ENCODE measurements at regions of chr4 and their contacts with region 1.

Region 1: GRCh38 chr4:81260443-81261101 is 45.5 kb upstream of the PRKG2 start:
- DNase-seq: no peak
- H3K4me3 ChIP-seq: no peak overlapping the region
- H3K27ac ChIP-seq: no peak overlapping the region
- H3K4me1 ChIP-seq: no peaks in the 10 kb centered on the region
- H3K27me3 ChIP-seq: no peaks in the 10 kb centered on the region
- CTCF ChIP-seq: no peak

Region 2: GRCh38 chr4:80913381-80913780 is 347.2 kb before region 1 on chr4:
- intact Hi-C with region 1: no loop called
- DNase-seq: no peak
- H3K4me3 ChIP-seq: no peak overlapping the region
- H3K27ac ChIP-seq: no peak overlapping the region
- H3K4me1 ChIP-seq: no peaks in the 10 kb centered on the region
- H3K27me3 ChIP-seq: no peaks in the 10 kb centered on the region
- CTCF ChIP-seq: no peak

Region 3: GRCh38 chr4:81069706-81070331 is 190.8 kb before region 1 on chr4:
- intact Hi-C with region 1: loop called (anchors 10 kb)
- DNase-seq: peak; percentile 73
- H3K4me3 ChIP-seq: no peak overlapping the region
- H3K27ac ChIP-seq: no peak overlapping the region
- H3K4me1 ChIP-seq: no peaks in the 10 kb centered on the region
- H3K27me3 ChIP-seq: no peaks in the 10 kb centered on the region
- CTCF ChIP-seq: peak; percentile 90

Region 4: GRCh38 chr4:81351654-81352445 is 91.3 kb after region 1 on chr4:
- intact Hi-C with region 1: loop called (anchors 10 kb)
- DNase-seq: peak; percentile 81
- H3K4me3 ChIP-seq: no peak overlapping the region
- H3K27ac ChIP-seq: no peak overlapping the region
- H3K4me1 ChIP-seq: no peaks in the 10 kb centered on the region
- H3K27me3 ChIP-seq: no peaks in the 10 kb centered on the region
- CTCF ChIP-seq: peak; percentile 92

Region 5: DNA sequence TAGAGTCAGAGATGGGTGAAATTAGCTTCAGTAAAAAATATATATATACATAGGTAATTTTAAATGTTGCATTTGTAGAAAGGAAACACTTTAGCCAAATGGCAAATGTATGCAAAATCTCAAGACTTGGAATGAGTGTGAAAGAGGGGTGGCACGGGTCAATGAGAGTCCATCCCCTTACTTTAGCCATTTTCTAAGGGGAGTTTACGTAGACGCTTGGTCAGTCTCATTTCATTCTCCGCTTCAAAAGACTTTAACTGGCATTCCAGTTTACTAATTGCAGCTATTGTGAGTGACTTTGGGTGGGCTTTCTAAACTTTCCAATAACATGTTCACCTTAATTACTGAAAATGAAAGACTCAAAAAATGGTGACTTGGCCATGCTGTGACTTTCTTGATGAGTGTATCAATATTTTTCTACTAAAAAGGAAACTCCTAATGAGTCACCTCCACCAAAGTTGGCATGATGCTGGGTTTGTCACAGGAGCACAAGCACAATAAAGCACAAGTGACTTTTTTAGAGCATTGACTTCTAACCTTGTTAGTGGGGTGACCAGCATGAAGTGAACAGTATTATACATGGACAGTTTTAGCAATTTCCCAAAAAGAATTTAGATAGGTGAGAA is 567.1 kb after region 1 on chr4:
- intact Hi-C with region 1: no loop called
- DNase-seq: no peak
- H3K4me3 ChIP-seq: no peak overlapping the region
- H3K27ac ChIP-seq: no peak overlapping the region
- H3K4me1 ChIP-seq: no peaks in the 10 kb centered on the region
- H3K27me3 ChIP-seq: no peaks in the 10 kb centered on the region
- CTCF ChIP-seq: no peak

Measured in colonic mucosa (tissue), 4 donors.